ENCODE measurements at regions of chr4 and their contacts with region 1.

Region 1: DNA sequence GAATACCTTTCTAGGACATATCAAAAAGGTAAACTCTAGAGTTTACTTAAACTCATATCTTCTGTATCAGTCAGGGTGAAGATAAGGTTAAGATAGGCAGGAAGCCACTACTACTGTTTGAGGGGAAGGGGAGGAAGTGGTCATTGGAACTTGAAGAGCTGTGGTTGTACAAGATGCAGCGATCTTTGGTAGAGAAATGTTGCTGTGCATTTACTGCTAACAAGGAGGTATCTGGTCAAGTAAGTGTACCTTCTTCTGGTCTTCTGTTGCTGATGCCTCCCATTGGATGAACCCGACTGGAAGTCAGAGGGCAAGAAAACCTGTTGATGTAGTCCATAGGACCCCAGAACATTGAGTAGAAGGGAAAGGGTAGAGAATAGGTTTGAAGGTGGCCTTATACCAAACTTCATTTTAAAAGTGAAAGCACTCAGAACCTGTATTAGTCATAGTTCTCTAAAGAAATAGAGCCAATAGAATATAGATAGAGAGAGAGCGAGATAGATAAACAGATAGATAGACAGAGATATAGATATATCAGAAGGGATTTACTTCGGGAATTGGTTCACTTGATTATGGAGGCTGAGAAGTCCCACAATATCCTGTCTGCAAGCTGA is 47.9 kb upstream of the TSPAN5 start:
- DNase-seq: peak in 9 of 14 experiments; percentile 5 to 89 (median 21)
- ATAC-seq: peak; percentile 94
- H3K4me3 ChIP-seq: peak overlapping the region; percentile 35
- H3K4me3 Mint-ChIP-seq: peak overlapping the region; percentile 82
- H3K27ac ChIP-seq: peak overlapping the region in 1 of 2 donors; percentile 19
- H3K27ac Mint-ChIP-seq: peak overlapping the region; percentile 74
- H3K4me1 ChIP-seq: peaks cover 20% of the 10 kb centered on the region
- H3K4me1 Mint-ChIP-seq: peaks cover 40% of the 10 kb centered on the region
- H3K27me3 ChIP-seq: no peaks in the 10 kb centered on the region
- H3K27me3 Mint-ChIP-seq: no peaks in the 10 kb centered on the region
- CTCF ChIP-seq: no peak

Region 2: GRCh38 chr4:98688411-98689290 is 17.7 kb before region 1 on chr4:
- CTCF ChIA-PET with region 1: no interaction called
- POLR2A ChIA-PET with region 1: interaction called, 4 read pairs
- intact Hi-C with region 1: loop called in 1 of 2 experiments (anchors 2 kb)
- DNase-seq: peak in 4 of 14 experiments; percentile 31 to 73 (median 64)
- ATAC-seq: peak; percentile 69
- H3K4me3 ChIP-seq: no peak overlapping the region
- H3K4me3 Mint-ChIP-seq: peak overlapping the region; percentile 62
- H3K27ac ChIP-seq: peak overlapping the region in 1 of 2 donors; percentile 19
- H3K27ac Mint-ChIP-seq: peak overlapping the region; percentile 80
- H3K4me1 ChIP-seq: peaks cover 25% of the 10 kb centered on the region
- H3K4me1 Mint-ChIP-seq: peaks cover 51% of the 10 kb centered on the region
- H3K27me3 ChIP-seq: no peaks in the 10 kb centered on the region
- H3K27me3 Mint-ChIP-seq: no peaks in the 10 kb centered on the region
- CTCF ChIP-seq: no peak